HEK293T (cell line): ENCODE measurements at regions of chr9 and their contacts with region 1.

Region 1: GRCh38 chr9:34637356-34638137 is at the start of gene SIGMAR1:
- DNase-seq: peak; percentile 91

Region 2: DNA sequence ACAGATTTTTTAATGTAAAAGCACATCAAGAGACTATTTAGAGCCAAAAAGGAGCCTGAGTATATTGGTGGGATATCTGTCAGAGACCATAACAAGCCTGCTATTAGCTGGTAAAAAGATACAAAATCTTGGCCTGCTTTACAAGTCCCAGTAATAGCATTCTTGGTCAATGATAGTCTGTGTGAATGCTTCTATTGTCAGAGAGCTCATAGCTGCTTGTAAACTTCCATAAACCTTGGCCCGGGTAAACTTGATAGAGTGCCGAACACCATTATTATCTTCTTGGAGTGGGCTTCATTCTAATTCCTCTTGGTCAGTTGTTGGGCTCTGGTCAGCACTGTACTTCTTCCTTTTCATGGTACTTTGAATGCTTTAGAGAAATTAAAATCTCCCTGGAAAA is 394.7 kb before region 1 on chr9:
- CTCF ChIA-PET with region 1: no interaction called
- POLR2A ChIA-PET with region 1: no interaction called
- DNase-seq: no peak

Region 3: GRCh38 chr9:34611829-34612630 is 25.5 kb before region 1 on chr9 and contains the start of gene RPP25L:
- CTCF ChIA-PET with region 1: interaction called, 15 read pairs
- POLR2A ChIA-PET with region 1: interaction called, 6 read pairs
- DNase-seq: peak; percentile 93

Region 4: DNA sequence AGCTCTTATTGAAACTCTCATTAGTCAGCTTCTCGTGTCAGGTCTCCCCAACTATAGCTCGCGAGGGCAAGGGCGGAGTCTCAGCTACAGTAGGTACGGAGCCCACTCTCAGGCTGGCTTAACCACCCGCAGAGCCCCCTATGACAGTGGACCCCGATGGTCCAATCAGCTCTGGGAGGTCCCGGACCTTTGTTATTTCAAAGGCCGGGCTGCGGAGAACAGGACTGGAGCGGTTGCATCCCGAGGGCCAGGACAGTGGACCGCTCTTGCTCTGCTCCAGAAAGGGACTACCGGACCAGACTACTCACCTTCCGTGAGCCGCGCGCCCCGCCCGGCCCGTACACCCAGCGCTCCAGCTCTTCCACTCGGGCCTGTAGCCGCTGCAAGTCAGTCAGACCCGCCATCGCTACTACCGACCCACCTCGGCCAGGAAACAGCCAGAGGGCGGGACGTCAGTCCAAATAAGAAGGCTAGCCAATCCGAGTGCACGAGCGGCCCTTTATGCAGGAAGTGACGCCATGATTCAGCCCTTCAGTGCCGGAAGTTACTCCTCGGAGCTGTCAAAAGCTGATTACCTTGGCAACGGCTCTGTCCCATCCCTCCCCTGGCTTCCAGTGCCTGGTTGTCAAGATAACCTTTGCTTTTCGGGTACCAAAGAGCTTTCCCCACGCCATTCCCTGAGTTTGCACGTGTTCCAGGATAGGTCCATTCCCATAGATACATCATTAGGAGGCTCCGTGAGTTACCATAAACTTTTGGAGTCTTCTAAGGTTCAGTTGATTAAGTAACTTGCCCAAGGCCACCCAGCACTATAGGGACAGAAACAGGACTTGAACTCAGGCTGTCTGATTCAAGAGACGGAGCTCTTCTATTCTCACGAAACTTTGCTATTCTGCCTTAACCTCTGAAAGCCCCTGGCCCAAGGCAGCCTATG is 17.2 kb before region 1 on chr9 and contains the start of gene DCTN3:
- CTCF ChIA-PET with region 1: interaction called, 5 read pairs
- POLR2A ChIA-PET with region 1: interaction called, 19 read pairs
- DNase-seq: peak; percentile 97

Region 5: DNA sequence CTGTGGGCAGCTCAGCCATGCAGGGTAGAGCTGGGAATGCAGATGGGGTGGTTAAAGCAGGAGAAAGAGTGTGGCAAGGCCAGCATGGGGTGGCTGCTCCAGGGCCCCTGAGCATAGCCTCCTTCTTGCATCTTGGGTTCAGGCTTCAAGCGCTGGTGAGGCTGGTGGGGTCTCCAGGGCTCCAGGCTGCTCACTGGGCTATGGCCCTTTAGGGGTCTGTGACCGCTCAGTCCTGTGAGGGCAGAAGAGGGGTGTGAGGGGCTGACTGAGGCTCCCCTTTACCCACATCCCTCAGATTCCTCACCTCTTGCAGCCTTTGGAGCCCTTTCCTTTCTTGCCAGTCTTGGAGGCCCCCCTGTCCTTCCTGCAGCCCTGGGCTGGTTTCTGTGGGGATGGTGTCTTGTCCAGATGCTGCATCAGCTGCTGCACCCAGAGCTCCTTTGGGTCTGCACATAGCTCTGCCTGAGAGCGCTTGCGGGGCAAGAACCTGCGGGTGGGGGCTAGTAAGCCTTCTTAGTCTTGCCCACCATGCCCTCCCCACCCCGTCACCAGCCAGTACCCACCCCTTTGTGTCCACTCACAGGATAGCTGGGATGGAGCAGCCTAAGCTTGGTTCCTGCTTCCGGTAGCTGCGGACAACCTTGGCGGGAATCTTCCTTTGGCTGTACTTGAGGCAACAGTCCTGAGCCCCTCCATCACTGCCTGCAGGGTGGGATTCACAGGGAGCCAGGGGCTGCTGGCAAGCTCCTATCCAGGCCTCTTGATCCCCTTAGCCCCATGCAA is 71.8 kb after region 1 on chr9:
- CTCF ChIA-PET with region 1: no interaction called
- POLR2A ChIA-PET with region 1: no interaction called
- DNase-seq: no peak